CD8-positive, alpha-beta memory T cell (primary cell): ENCODE measurements at regions of chr6 and their contacts with region 1.

Region 1: DNA sequence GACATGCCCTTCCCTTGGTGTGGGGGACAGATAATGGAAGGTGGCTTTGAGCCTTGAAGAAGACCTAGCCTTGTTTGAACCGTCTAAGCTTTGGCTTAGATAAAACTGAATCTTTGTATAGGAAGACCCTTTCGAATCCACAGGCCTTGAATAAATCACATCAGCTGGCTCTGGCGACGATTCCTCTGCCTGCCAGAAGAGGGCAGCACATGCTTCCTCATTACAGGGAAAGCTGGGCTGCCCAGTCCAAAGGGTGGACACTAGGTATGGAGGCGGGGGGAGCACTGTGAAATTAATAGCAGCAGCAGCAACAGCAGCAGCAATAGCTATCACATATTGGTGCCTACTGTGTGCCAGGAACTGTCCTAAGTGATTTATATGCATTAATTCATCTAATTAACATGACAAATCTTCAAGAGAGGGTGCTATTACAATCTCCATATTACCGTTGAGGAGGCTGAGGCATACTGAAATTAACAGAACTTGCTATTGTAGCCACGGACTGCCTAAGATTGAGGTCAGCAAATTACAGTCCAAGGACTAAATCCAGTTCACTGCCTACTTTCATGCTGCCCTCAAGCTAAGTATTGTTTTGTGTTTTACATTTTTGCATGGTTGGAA is 85.1 kb downstream of the CLIC5 start:
- DNase-seq: peak; percentile 21 to 63 (median 40)
- H3K4me3 ChIP-seq: no peak overlapping the region
- H3K4me3 Mint-ChIP-seq: no peak overlapping the region
- H3K27ac ChIP-seq: no peak overlapping the region
- H3K27ac Mint-ChIP-seq: peak overlapping the region in 2 of 8 donors; percentile 71 to 75
- H3K4me1 ChIP-seq: no peaks in the 10 kb centered on the region
- H3K4me1 Mint-ChIP-seq: peaks cover 4 to 7% (median 7%) of the 10 kb centered on the region in 3 donors
- H3K27me3 ChIP-seq: no peaks in the 10 kb centered on the region
- H3K27me3 Mint-ChIP-seq: no peaks in the 10 kb centered on the region

Region 2: DNA sequence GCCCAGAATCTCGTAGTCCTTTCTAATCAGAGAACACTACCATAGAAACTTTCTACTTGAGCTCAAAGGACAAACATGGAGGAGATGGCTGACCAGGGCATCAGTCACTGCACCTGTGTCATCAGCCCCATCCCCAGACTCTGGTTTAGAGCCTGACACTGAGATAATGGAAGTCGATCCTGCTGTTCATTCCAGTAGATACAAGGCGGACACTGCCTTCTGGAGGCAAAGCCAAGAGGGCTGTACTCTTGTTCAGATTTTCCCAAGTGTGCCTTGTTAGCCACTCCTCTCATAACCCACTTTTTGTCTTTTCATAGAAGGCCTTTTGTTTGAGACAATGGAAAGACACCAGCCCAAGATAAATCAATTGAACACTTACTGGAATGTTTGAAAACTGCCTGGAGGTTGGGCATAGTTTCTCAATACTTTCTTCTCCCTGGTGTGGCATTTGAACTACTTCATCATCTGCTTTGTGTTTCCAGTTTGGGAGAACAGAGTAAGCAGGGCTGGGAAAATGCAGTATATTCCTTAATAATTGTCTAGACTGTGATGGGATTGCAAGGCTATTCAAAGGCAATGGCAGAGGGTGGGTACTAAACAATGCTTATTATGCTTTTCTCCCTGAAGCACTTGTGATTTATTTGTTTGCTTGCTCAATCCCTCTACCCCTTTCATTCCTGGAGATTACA is 14.6 kb before region 1 on chr6:
- CTCF ChIA-PET with region 1: interaction called, 13 read pairs
- POLR2A ChIA-PET with region 1: no interaction called
- DNase-seq: no peak
- H3K4me3 ChIP-seq: no peak overlapping the region
- H3K4me3 Mint-ChIP-seq: no peak overlapping the region
- H3K27ac ChIP-seq: no peak overlapping the region
- H3K27ac Mint-ChIP-seq: no peak overlapping the region
- H3K4me1 ChIP-seq: no peaks in the 10 kb centered on the region
- H3K4me1 Mint-ChIP-seq: no peaks in the 10 kb centered on the region
- H3K27me3 ChIP-seq: no peaks in the 10 kb centered on the region
- H3K27me3 Mint-ChIP-seq: peaks cover 0 to 3% of the 10 kb centered on the region in 2 donors

Region 3: GRCh38 chr6:46011241-46012085 is 80.9 kb after region 1 on chr6:
- CTCF ChIA-PET with region 1: interaction called, 10 read pairs
- POLR2A ChIA-PET with region 1: interaction called, 3 read pairs
- DNase-seq: peak; percentile 37 to 85 (median 62)
- H3K4me3 ChIP-seq: peak overlapping the region; percentile 42
- H3K4me3 Mint-ChIP-seq: peak overlapping the region; percentile 44 to 85 (median 81)
- H3K27ac ChIP-seq: peak overlapping the region; percentile 52
- H3K27ac Mint-ChIP-seq: peak overlapping the region; percentile 91 to 99 (median 96)
- H3K4me1 ChIP-seq: peaks cover 53% of the 10 kb centered on the region
- H3K4me1 Mint-ChIP-seq: peaks cover 60 to 66% (median 65%) of the 10 kb centered on the region in 3 donors
- H3K27me3 ChIP-seq: no peaks in the 10 kb centered on the region
- H3K27me3 Mint-ChIP-seq: peaks cover 0 to 5% of the 10 kb centered on the region in 2 donors